Activated CD4-positive, alpha-beta T cell treated with anti-CD3 and anti-CD28 coated beads for 36 hours (primary cell): ENCODE measurements at regions of chr7 and their contacts with region 1.

Region 1: DNA sequence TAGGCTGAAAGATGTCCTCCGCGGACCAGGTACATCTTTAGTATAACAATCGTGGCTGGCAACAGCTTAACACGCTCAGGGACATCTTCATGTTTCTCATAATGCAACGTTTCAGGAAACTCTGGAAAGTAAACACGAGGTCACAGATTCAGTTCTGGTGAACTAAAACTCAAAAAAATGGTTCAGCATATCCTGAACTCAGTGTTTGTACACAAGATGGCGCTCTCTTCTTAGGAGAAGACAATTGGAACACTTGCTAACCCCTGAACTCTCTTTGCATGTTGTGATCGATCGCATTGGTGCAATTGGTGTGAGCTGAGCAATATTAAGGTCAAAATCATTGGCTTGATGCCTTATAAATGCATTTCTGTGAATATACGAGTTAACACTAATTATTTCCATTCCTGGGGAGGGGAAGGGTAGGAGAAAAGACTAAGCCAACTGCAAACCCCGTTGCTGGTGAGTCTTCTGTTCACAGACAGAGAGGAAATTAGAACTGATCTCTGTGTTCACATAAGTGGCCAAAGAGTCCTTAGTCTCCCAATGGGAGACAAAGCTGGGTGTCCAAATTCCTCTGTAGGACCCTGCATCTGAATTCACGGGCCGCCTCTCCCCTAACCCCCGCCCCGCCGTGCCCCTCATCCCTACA is 52.6 kb upstream of the FAM180A start:
- DNase-seq: peak; percentile 23
- ATAC-seq: peak; percentile 70
- H3K4me3 Mint-ChIP-seq: no peak overlapping the region
- H3K27ac Mint-ChIP-seq: no peak overlapping the region
- H3K4me1 Mint-ChIP-seq: peaks cover 9% of the 10 kb centered on the region
- H3K27me3 Mint-ChIP-seq: peaks cover 12% of the 10 kb centered on the region

Region 2: DNA sequence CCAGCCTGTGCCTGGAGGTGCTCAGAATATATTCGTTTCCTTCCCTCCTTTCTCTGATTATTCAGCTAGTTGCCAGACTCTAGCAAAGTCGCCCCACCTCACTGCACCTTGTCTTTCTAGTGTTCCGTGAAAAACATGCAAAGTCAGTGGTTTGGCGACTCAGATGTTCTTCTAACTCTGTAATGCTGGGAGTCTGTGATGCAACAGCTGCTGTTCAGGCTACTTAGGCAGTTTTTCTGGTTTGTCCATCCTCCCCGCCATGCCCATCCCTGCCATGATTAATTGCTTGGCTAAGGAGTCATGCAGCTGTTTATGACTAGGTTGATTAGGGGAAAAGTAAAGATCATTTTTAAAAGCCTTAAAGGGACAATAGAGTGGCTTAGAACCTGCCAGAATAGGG is 76.6 kb after region 1 on chr7:
- CTCF ChIA-PET with region 1: no interaction called
- POLR2A ChIA-PET with region 1: no interaction called
- intact Hi-C with region 1: no loop called
- DNase-seq: no peak
- ATAC-seq: no peak
- H3K4me3 Mint-ChIP-seq: no peak overlapping the region
- H3K27ac Mint-ChIP-seq: no peak overlapping the region
- H3K4me1 Mint-ChIP-seq: no peaks in the 10 kb centered on the region
- H3K27me3 Mint-ChIP-seq: peaks cover 8% of the 10 kb centered on the region

Region 3: GRCh38 chr7:136009488-136010079 is 208.4 kb after region 1 on chr7:
- CTCF ChIA-PET with region 1: interaction called, 14 read pairs
- POLR2A ChIA-PET with region 1: no interaction called
- intact Hi-C with region 1: loop called (anchors 1 kb)
- DNase-seq: no peak
- ATAC-seq: no peak
- H3K4me3 Mint-ChIP-seq: no peak overlapping the region
- H3K27ac Mint-ChIP-seq: no peak overlapping the region
- H3K4me1 Mint-ChIP-seq: peaks cover 4% of the 10 kb centered on the region
- H3K27me3 Mint-ChIP-seq: peaks cover 8% of the 10 kb centered on the region

Region 4: DNA sequence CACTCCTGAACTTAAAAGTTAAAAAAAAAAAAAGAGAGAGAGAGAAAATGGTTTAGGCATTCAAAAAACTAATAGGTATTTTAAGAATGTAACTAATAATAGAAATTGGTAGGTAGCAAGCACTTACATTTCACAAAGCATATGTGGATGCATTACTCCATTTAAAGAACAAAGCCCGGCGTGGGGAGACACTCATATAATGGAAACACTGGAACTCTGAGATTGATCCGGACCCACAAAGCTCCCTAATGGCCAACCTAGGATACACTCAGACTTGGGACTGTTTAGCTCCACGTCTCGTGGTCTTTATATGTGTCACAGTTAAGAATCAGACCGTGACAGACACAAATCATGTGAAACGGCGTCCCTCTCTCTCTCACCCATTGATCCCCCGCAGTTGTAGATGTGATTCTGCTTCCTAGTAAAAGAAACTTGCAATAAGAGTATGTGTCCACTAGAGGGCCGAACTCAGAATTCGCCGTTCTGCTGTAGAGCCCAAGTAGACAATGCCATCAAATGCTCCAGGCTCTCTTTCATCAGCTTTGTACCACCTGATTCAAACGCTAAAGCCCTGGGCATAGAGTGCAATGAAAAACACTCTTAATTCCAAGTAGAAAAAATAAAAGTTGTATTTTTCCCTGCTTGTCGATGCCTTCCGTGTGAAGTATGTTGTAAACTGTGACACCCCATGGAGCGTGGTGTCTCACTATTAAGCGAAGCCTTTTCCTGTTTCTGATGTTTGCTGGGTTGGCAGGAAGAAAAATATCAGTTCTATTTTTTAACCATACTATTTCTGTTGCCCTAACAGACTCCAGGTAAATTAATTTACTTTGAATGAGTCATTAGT is 605.0 kb after region 1 on chr7:
- CTCF ChIA-PET with region 1: no interaction called
- POLR2A ChIA-PET with region 1: no interaction called
- intact Hi-C with region 1: loop called in 1 of 2 experiments (anchors 2 kb)
- DNase-seq: peak; percentile 44
- ATAC-seq: peak; percentile 63
- H3K4me3 Mint-ChIP-seq: no peak overlapping the region
- H3K27ac Mint-ChIP-seq: no peak overlapping the region
- H3K4me1 Mint-ChIP-seq: peaks cover 6% of the 10 kb centered on the region
- H3K27me3 Mint-ChIP-seq: peaks cover 5% of the 10 kb centered on the region

Region 5: GRCh38 chr7:136687693-136688322 is 886.6 kb after region 1 on chr7:
- CTCF ChIA-PET with region 1: no interaction called
- POLR2A ChIA-PET with region 1: no interaction called
- intact Hi-C with region 1: loop called in 1 of 2 experiments (anchors 10 kb)
- DNase-seq: peak; percentile 5
- ATAC-seq: no peak
- H3K4me3 Mint-ChIP-seq: no peak overlapping the region
- H3K27ac Mint-ChIP-seq: no peak overlapping the region
- H3K4me1 Mint-ChIP-seq: no peaks in the 10 kb centered on the region
- H3K27me3 Mint-ChIP-seq: no peaks in the 10 kb centered on the region

Region 6: GRCh38 chr7:136874238-136875032 is 1073.3 kb after region 1 on chr7:
- CTCF ChIA-PET with region 1: no interaction called
- POLR2A ChIA-PET with region 1: no interaction called
- intact Hi-C with region 1: loop called in 1 of 2 experiments (anchors 5 kb)
- DNase-seq: no peak
- ATAC-seq: no peak
- H3K4me3 Mint-ChIP-seq: no peak overlapping the region
- H3K27ac Mint-ChIP-seq: no peak overlapping the region
- H3K4me1 Mint-ChIP-seq: no peaks in the 10 kb centered on the region
- H3K27me3 Mint-ChIP-seq: peaks cover 28% of the 10 kb centered on the region

Region 7: GRCh38 chr7:137454246-137454724 is 1653.1 kb after region 1 on chr7:
- CTCF ChIA-PET with region 1: no interaction called
- POLR2A ChIA-PET with region 1: no interaction called
- intact Hi-C with region 1: loop called (anchors 2 to 5 kb)
- DNase-seq: no peak
- ATAC-seq: no peak
- H3K4me3 Mint-ChIP-seq: no peak overlapping the region
- H3K27ac Mint-ChIP-seq: no peak overlapping the region
- H3K4me1 Mint-ChIP-seq: no peaks in the 10 kb centered on the region
- H3K27me3 Mint-ChIP-seq: peaks cover 9% of the 10 kb centered on the region